Activated B cell treated with CpG ODN at 0.5 μM for 24 hours (primary cell): ENCODE measurements at regions of chr1 and their contacts with region 1.

Region 1: GRCh38 chr1:220776720-220777326 is 9.9 kb upstream of the MTARC1 start:
- DNase-seq: peak; percentile 76
- ATAC-seq: peak; percentile 94
- H3K4me3 Mint-ChIP-seq: no peak overlapping the region
- H3K27ac Mint-ChIP-seq: no peak overlapping the region
- H3K4me1 Mint-ChIP-seq: peaks cover 24% of the 10 kb centered on the region
- H3K27me3 Mint-ChIP-seq: no peaks in the 10 kb centered on the region
- CTCF ChIP-seq: peak; percentile 32

Region 2: GRCh38 chr1:219990782-219991510 is 785.9 kb before region 1 on chr1:
- CTCF ChIA-PET with region 1: no interaction called
- POLR2A ChIA-PET with region 1: no interaction called
- intact Hi-C with region 1: loop called (anchors 2 kb)
- DNase-seq: no peak
- ATAC-seq: no peak
- H3K4me3 Mint-ChIP-seq: no peak overlapping the region
- H3K27ac Mint-ChIP-seq: peak overlapping the region; percentile 53
- H3K4me1 Mint-ChIP-seq: peaks cover 49% of the 10 kb centered on the region
- H3K27me3 Mint-ChIP-seq: no peaks in the 10 kb centered on the region
- CTCF ChIP-seq: no peak

Region 3: GRCh38 chr1:220189750-220190347 is 587.0 kb before region 1 on chr1:
- CTCF ChIA-PET with region 1: interaction called, 16 read pairs
- POLR2A ChIA-PET with region 1: no interaction called
- intact Hi-C with region 1: loop called (anchors 1 kb)
- DNase-seq: no peak
- ATAC-seq: no peak
- H3K4me3 Mint-ChIP-seq: no peak overlapping the region
- H3K27ac Mint-ChIP-seq: no peak overlapping the region
- H3K4me1 Mint-ChIP-seq: no peaks in the 10 kb centered on the region
- H3K27me3 Mint-ChIP-seq: no peaks in the 10 kb centered on the region
- CTCF ChIP-seq: no peak

Region 4: DNA sequence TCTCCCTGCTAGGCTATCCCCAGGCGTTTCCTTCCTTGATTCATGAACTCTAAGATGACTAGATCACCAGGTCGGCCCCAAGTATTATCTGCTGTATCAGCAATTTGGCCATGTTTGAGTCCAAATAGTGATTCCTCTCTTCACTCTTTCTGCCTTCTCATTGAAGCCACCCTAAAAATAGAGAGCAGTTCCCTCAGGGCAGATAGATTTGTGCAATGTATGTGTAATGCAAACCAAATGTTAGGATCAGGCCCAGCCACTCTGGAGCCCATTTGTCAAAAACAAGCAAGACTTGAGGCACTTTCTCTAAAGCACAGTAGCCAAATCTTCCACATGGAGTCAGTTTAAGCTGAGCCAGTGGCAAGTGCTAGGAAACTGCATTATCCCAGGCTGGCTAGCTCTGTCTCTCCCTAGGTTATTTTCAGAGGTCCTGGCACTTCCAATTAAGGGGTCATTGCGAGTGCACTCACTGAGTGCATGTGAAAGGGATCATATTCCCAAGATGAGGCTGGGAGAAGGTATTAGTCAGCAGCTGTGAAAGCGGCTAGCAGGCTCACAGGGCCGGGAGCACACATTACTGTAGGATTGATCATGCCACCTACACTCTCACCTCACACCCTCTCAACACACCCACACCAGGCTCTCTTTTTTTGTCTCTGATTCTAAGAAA is 406.7 kb before region 1 on chr1:
- CTCF ChIA-PET with region 1: no interaction called
- POLR2A ChIA-PET with region 1: no interaction called
- intact Hi-C with region 1: loop called (anchors 5 kb)
- DNase-seq: no peak
- ATAC-seq: no peak
- H3K4me3 Mint-ChIP-seq: no peak overlapping the region
- H3K27ac Mint-ChIP-seq: no peak overlapping the region
- H3K4me1 Mint-ChIP-seq: no peaks in the 10 kb centered on the region
- H3K27me3 Mint-ChIP-seq: peaks cover 6% of the 10 kb centered on the region
- CTCF ChIP-seq: no peak

Region 5: DNA sequence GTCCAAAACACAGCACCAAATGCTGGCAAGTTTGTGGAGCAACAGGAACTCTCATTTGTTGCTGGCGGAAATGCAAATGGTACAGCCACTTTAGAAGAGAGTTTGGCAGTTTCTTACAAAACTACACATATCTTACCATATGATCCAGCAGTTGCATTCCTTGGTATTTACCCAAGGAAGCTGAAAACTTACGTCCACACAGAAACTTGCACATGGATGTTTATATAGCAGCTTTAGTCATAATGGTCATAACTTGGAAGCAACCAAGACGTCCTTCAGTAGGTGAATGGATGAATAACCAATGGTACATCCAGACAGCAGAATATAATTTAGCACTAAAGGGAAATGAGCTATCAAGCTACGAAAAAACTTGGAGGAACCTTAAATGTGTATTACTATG is 182.5 kb before region 1 on chr1:
- CTCF ChIA-PET with region 1: no interaction called
- POLR2A ChIA-PET with region 1: no interaction called
- intact Hi-C with region 1: no loop called
- DNase-seq: no peak
- ATAC-seq: no peak
- H3K4me3 Mint-ChIP-seq: no peak overlapping the region
- H3K27ac Mint-ChIP-seq: no peak overlapping the region
- H3K4me1 Mint-ChIP-seq: no peaks in the 10 kb centered on the region
- H3K27me3 Mint-ChIP-seq: no peaks in the 10 kb centered on the region
- CTCF ChIP-seq: no peak

Region 6: DNA sequence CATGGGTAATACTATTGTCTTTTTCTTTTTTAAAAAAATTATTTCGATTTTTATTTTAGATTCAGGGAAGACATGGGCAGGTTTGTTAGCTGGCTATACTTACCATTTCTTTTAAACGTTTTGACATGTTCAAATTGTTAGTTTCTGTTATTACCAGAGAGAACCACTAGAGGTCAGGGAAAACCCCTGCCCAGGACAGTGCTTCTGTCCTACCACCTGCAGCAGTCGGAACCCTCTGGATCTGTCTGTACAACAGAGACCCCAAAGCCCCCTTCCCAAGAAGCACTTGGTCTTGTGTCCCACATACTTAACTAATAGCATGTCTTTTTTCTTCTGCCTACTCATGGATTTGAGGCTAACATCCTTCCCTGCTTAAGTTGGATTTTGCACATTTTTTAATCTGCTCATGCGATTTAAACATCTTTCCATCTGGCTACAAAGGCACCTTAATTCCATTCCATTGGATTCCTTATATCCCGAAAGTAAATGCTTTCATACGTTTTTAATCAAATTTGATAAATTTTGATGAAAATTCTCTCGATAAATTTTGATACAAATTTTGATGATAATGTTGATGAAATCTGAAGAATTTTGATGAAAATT is 96.6 kb before region 1 on chr1:
- CTCF ChIA-PET with region 1: interaction called, 14 read pairs
- POLR2A ChIA-PET with region 1: no interaction called
- intact Hi-C with region 1: loop called (anchors 1 kb)
- DNase-seq: no peak
- ATAC-seq: peak; percentile 83
- H3K4me3 Mint-ChIP-seq: no peak overlapping the region
- H3K27ac Mint-ChIP-seq: no peak overlapping the region
- H3K4me1 Mint-ChIP-seq: peaks cover 3% of the 10 kb centered on the region
- H3K27me3 Mint-ChIP-seq: no peaks in the 10 kb centered on the region
- CTCF ChIP-seq: no peak

Region 7: GRCh38 chr1:220733090-220733601 is 43.7 kb before region 1 on chr1:
- CTCF ChIA-PET with region 1: interaction called, 44 read pairs
- POLR2A ChIA-PET with region 1: interaction called, 4 read pairs
- intact Hi-C with region 1: loop called (anchors 1 kb)
- DNase-seq: peak; percentile 67
- ATAC-seq: peak; percentile 95
- H3K4me3 Mint-ChIP-seq: peak overlapping the region; percentile 47
- H3K27ac Mint-ChIP-seq: peak overlapping the region; percentile 30
- H3K4me1 Mint-ChIP-seq: peaks cover 25% of the 10 kb centered on the region
- H3K27me3 Mint-ChIP-seq: no peaks in the 10 kb centered on the region
- CTCF ChIP-seq: peak; percentile 51

Region 8: DNA sequence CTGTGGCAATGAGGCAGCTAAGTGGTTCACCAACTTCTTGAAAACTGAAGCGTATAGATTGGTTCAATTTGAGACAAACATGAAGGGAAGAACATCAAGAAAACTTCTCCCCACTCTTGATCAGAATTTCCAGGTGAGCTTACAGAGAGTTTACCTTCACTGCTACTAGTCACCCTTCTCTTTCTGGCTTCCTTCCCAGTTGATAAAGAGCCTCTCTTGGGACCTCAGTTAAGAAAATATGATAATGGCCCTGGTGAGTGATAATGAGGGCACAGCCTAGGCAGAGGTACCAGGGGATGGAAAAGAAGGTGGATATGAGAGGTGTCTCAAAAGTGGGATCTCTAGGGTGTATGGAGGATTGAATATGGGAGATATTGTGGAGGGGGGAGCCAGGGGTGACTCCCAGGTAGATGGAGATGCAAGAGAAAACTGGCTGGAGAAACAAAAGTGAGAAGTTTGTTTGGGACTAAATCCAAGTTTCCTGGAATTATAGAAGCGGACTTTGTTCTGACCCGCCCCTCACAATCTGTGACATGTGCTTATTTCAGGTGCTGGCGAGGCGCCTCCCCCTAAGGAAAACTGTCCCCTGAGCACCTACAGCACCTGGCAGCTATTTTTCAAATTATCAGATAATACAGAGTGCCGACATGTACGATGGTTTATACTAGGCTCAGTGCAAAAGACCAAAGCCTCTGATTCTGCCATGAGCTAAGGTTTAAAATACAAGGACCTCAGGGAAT is 15.0 kb before region 1 on chr1:
- CTCF ChIA-PET with region 1: interaction called, 19 read pairs
- POLR2A ChIA-PET with region 1: no interaction called
- intact Hi-C with region 1: no loop called
- DNase-seq: no peak
- ATAC-seq: no peak
- H3K4me3 Mint-ChIP-seq: no peak overlapping the region
- H3K27ac Mint-ChIP-seq: no peak overlapping the region
- H3K4me1 Mint-ChIP-seq: no peaks in the 10 kb centered on the region
- H3K27me3 Mint-ChIP-seq: peaks cover 2% of the 10 kb centered on the region
- CTCF ChIP-seq: no peak